Thyroid gland (tissue), 4 donors: ENCODE measurements at regions of chr13 and their contacts with region 1.

Region 1: GRCh38 chr13:50081679-50082425 is 66.6 kb downstream of the KCNRG start:
- DNase-seq: peak; percentile 97 to 99
- H3K4me3 ChIP-seq: peak overlapping the region; percentile 53 to 77 (median 69)
- H3K27ac ChIP-seq: peak overlapping the region; percentile 34 to 91 (median 76)
- H3K4me1 ChIP-seq: peaks cover 0 to 15% of the 10 kb centered on the region in 2 donors
- H3K27me3 ChIP-seq: no peaks in the 10 kb centered on the region
- CTCF ChIP-seq: peak in 2 of 6 experiments; percentile 11 to 21
- POLR2A ChIP-seq: peak; percentile 11 to 62

Region 2: DNA sequence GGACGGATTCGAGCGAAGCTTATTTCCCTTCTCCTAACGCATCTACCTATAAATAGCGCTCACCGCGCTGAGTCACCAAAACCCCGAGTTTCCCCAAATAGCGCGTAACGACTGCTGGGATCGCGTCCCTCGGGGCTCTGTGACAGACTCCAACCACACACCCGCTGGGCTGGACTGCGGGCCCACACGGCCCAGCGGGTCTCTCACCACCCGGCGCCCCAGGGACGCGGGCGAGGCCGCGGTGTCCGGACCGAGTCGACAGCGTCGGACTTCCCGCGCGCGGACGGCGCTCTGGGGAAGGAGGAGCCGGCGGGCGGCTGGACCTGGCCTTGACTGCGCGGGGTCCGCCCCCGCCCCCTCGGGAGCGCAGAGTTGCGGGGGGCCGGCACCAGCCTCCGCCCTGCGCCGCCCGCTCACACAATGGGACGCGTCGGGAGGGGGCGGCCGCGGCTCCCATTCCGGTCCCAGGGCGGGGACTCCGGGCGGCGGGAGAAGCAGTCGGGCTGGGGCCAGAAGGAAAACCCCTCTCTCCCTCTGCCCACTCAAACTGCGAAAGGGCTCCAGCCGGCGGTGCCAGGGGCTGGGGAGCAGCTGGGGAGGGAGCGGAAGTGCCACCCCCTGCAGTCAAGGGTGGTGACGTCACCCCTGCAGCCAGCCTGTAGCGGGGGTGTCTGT is 42.1 kb after region 1 on chr13:
- intact Hi-C with region 1: loop called (anchors 5 kb)
- DNase-seq: peak; percentile 74 to 96
- H3K4me3 ChIP-seq: peak overlapping the region; percentile 55 to 99 (median 62)
- H3K27ac ChIP-seq: peak overlapping the region; percentile 92 to 100 (median 96)
- H3K4me1 ChIP-seq: peaks cover 9 to 24% of the 10 kb centered on the region in 2 donors
- H3K27me3 ChIP-seq: peaks cover 8% of the 10 kb centered on the region
- CTCF ChIP-seq: peak in 2 of 6 experiments; percentile 2 to 6
- POLR2A ChIP-seq: peak; percentile 48 to 93